Activated naive CD4-positive, alpha-beta T cell treated with anti-CD3 and anti-CD28 coated beads for 36 hours (primary cell): ENCODE measurements at regions of chr22 and their contacts with region 1.

Region 1: GRCh38 chr22:40289991-40290459 is 56.3 kb upstream of the ADSL start:
- DNase-seq: peak; percentile 86
- H3K4me3 Mint-ChIP-seq: peak overlapping the region; percentile 68
- H3K27ac Mint-ChIP-seq: peak overlapping the region; percentile 95
- H3K4me1 Mint-ChIP-seq: peaks cover 67% of the 10 kb centered on the region
- H3K27me3 Mint-ChIP-seq: no peaks in the 10 kb centered on the region

Region 2: GRCh38 chr22:40044102-40044869 is 245.7 kb before region 1 on chr22:
- CTCF ChIA-PET with region 1: no interaction called
- intact Hi-C with region 1: loop called (anchors 1 kb)
- DNase-seq: peak; percentile 99
- H3K4me3 Mint-ChIP-seq: peak overlapping the region; percentile 92
- H3K27ac Mint-ChIP-seq: peak overlapping the region; percentile 99
- H3K4me1 Mint-ChIP-seq: peaks cover 23% of the 10 kb centered on the region
- H3K27me3 Mint-ChIP-seq: no peaks in the 10 kb centered on the region

Region 3: DNA sequence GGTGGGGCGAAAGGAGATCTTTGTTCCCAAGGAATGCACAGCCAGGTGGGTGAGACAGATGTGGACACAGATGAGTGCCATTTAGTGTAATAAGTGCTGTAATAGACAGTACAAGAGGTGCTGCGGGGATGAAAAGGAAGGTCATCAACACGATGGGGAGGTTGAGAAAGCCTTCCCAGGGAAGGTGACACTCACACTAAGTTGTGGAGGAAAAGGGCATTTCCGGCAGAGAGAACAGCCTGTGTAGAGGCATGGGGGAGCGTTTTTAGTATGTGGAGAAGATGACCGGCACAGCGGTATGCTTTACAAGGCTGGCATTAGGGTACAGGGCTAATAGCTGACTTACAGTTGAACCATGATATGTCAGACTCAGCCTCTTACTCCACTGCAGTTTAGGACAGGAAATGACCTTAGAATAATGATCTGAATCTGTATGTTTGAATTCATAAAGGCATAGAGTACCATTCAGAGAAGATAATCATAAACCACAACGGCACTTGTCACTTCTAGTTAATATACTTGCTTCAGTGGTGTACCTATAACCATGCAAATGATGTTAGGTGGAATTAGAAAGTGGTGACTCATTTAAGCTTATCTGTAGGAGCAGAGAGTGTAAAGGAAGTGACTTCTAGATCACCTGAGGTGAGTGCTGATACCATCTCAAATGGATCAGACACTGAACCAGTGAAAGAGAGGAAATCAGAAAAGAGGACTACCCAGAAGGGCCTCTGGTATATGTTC is 234.7 kb before region 1 on chr22:
- CTCF ChIA-PET with region 1: no interaction called
- intact Hi-C with region 1: loop called (anchors 5 kb)
- DNase-seq: peak; percentile 28
- H3K4me3 Mint-ChIP-seq: peak overlapping the region; percentile 69
- H3K27ac Mint-ChIP-seq: peak overlapping the region; percentile 95
- H3K4me1 Mint-ChIP-seq: peaks cover 80% of the 10 kb centered on the region
- H3K27me3 Mint-ChIP-seq: no peaks in the 10 kb centered on the region

Region 4: DNA sequence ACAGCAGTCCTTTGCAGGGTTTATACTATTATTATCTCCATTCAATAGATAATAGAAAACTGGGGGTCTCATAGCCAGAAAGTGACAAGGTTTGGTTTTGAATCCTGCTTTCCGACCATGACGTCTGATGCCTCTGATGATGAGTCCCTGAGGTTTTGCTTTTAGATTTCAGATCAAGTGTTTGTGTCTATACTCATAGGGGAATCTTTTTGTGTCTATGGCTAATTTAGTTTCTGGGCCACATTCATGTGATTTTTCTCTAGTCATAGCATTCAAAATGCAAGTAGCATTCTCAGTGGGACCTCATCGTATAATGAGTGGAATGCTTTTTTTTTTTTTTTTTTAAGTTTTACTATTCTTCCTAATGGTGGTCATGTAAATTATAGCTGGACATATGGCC is 39.4 kb before region 1 on chr22:
- CTCF ChIA-PET with region 1: no interaction called
- intact Hi-C with region 1: loop called (anchors 2 kb)
- DNase-seq: peak; percentile 70
- H3K4me3 Mint-ChIP-seq: no peak overlapping the region
- H3K27ac Mint-ChIP-seq: peak overlapping the region; percentile 16
- H3K4me1 Mint-ChIP-seq: peaks cover 70% of the 10 kb centered on the region
- H3K27me3 Mint-ChIP-seq: no peaks in the 10 kb centered on the region

Region 5: GRCh38 chr22:40258451-40259046 is 31.5 kb before region 1 on chr22:
- CTCF ChIA-PET with region 1: no interaction called
- intact Hi-C with region 1: loop called (anchors 2 kb)
- DNase-seq: peak; percentile 46
- H3K4me3 Mint-ChIP-seq: no peak overlapping the region
- H3K27ac Mint-ChIP-seq: peak overlapping the region; percentile 66
- H3K4me1 Mint-ChIP-seq: peaks cover 60% of the 10 kb centered on the region
- H3K27me3 Mint-ChIP-seq: no peaks in the 10 kb centered on the region

Region 6: GRCh38 chr22:40276996-40277823 is 12.8 kb before region 1 on chr22:
- CTCF ChIA-PET with region 1: interaction called, 3 read pairs
- intact Hi-C with region 1: loop called (anchors 1 kb)
- DNase-seq: no peak
- H3K4me3 Mint-ChIP-seq: no peak overlapping the region
- H3K27ac Mint-ChIP-seq: peak overlapping the region; percentile 93
- H3K4me1 Mint-ChIP-seq: peaks cover 48% of the 10 kb centered on the region
- H3K27me3 Mint-ChIP-seq: no peaks in the 10 kb centered on the region

Region 7: DNA sequence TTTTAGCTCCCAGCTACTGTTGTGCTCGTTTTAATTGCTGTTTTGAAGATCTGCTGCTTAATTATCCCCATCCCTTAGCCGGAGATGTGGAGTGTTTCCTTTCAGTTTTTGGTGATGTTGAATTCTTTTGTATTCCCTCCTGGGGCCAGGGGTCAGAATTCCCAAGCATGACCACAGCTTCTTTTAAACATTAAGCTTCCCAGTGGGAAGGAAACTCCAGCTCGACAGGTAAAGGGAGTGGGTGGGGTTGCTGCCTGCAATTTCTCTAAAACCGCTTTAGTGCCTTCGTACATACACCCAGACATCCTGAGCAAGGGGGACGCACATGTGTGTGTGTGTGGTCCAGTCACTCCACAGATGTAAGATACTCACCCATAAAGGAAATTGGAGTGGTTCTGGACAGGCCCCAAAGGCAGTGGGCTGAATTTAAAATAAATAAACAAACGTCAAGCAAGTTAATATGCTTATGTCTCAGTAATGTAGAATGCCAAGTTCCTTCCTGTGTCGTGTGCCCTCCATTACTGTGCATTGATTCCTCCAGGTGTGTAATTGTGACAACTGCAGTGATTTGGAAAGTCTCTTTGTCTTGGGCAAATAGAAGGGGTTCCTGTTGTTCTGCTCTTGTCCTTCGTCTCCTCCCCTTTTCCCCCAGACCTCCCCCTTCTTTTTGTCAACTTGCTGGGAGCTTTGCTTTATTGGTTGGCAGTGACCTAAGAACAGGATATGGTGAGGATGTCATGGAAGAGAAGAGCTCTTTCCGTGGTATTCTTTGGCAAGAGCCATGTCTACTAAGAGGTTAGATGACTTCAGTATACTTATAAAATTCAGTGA is 37.1 kb after region 1 on chr22:
- CTCF ChIA-PET with region 1: interaction called, 3 read pairs
- intact Hi-C with region 1: loop called (anchors 1 kb)
- DNase-seq: no peak
- H3K4me3 Mint-ChIP-seq: peak overlapping the region; percentile 2
- H3K27ac Mint-ChIP-seq: peak overlapping the region; percentile 68
- H3K4me1 Mint-ChIP-seq: peaks cover 83% of the 10 kb centered on the region
- H3K27me3 Mint-ChIP-seq: no peaks in the 10 kb centered on the region

Region 8: GRCh38 chr22:40509401-40510134 is 219.5 kb after region 1 on chr22:
- CTCF ChIA-PET with region 1: no interaction called
- intact Hi-C with region 1: no loop called
- DNase-seq: no peak
- H3K4me3 Mint-ChIP-seq: no peak overlapping the region
- H3K27ac Mint-ChIP-seq: no peak overlapping the region
- H3K4me1 Mint-ChIP-seq: peaks cover 19% of the 10 kb centered on the region
- H3K27me3 Mint-ChIP-seq: no peaks in the 10 kb centered on the region